ENCODE measurements at regions of chr4 and their contacts with region 1.

Region 1: GRCh38 chr4:40309250-40309774 is 25.8 kb upstream of the CHRNA9 start:
- DNase-seq: peak; percentile 95
- ATAC-seq: peak; percentile 68
- H3K4me3 Mint-ChIP-seq: peak overlapping the region; percentile 79
- H3K27ac Mint-ChIP-seq: peak overlapping the region; percentile 98
- H3K4me1 Mint-ChIP-seq: peaks cover 86% of the 10 kb centered on the region
- H3K27me3 Mint-ChIP-seq: no peaks in the 10 kb centered on the region

Region 2: DNA sequence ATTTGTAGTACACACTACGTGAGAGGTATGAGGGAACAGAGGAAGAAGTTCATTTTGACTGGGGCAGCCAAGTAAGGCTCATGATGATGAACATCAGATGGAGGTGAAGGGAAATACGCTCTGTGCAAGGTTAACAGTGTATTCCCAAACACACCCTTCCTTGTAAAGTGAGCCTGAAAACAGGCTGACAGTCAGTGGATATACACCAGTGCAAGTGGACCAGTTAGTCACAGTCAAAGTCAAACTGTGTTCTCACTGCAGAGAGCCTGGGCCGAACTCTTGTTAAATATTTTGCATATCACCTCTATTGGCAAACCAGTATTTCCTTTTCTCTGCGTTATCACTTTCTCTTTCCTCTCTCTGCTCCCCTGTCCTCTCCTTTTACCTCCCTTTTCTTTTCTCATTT is 135.8 kb before region 1 on chr4:
- CTCF ChIA-PET with region 1: no interaction called
- POLR2A ChIA-PET with region 1: no interaction called
- DNase-seq: peak; percentile 38
- ATAC-seq: peak; percentile 81
- H3K4me3 Mint-ChIP-seq: peak overlapping the region; percentile 52
- H3K27ac Mint-ChIP-seq: peak overlapping the region; percentile 84
- H3K4me1 Mint-ChIP-seq: peaks cover 32% of the 10 kb centered on the region
- H3K27me3 Mint-ChIP-seq: no peaks in the 10 kb centered on the region

Region 3: DNA sequence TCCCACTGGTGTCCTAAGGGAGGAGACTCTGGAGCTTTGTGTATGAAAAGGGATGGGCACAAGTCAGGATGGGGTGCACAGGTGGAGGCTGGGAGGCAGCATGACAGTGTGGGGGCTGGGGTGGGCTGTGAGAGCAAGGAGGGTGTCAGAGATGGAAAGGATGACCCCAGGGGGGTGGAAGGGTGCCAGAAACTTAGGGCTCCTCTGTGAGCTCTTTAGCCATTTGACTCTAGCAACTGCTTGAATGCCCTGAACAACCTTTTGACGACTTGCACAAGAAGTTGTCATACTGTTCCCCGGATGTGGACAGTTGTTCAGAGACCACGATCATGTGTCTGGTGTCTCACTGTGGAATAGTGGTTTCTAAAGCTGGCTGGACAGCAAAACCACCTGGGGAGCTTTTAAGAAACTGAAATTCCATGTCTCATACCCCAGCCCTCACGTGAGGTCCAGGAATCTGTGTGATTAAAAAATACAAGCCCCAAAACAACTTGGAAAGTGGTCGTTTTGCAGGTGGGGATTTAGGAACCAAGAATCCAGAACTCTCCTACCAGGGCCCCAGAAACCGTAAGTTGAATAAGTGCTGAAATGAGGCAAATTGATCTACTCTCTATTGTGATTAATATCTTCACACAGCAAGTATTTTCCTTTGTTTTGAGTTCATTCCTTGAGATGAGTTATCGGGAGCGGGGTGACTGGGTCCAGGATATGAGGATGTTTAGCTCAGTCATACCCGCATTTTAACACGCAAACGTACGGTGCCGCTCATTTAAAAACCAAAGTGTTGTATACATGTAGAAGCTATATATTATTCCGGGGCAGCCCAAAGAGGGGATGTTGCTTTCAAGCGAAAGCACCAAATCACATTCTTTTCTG is 109.1 kb before region 1 on chr4:
- CTCF ChIA-PET with region 1: interaction called, 149 read pairs
- POLR2A ChIA-PET with region 1: interaction called, 155 read pairs
- DNase-seq: peak; percentile 90
- ATAC-seq: peak; percentile 45
- H3K4me3 Mint-ChIP-seq: peak overlapping the region; percentile 93
- H3K27ac Mint-ChIP-seq: peak overlapping the region; percentile 96
- H3K4me1 Mint-ChIP-seq: peaks cover 37% of the 10 kb centered on the region
- H3K27me3 Mint-ChIP-seq: no peaks in the 10 kb centered on the region

Region 4: DNA sequence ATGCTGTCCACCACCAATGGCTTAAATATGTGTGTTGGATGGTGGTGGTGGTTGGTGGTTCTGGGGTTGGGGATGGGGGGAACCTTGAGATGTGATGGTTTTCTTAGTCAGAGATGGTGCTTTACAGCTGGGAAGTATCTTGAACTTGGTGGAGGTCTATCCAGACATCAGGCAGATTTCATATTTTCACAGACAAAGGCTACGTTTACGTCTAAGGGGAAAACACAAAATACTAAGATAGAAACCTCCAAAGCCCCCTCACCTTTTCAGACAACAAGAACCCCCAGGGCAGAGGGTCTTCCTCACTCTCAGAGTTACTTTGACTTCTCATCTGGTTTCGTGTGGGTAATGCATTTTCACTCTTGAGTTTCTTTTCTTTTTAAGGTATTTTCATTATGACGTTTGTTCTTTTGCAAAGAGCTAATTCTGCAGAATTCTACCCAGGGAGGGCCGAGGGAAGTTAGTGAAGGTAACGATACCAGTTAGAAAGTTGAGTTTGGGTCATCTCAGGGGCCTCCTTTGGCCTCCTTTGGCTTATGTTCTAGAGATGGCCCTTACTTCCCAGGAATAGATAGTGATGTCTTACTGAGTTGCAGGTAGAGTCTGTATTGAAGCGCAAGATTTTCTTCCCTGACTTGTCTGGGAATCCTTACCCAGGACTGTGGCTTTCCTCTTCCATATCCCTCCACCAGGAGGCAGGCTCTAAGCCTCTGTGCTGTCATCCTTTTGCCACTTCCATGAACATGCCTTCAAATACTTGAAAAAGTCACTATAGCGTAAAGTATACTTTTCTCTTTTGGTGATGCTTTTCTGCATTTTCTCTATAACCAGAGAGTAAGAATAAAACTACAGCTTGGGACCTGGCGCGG is 80.6 kb before region 1 on chr4:
- CTCF ChIA-PET with region 1: interaction called, 145 read pairs
- POLR2A ChIA-PET with region 1: interaction called, 16 read pairs
- DNase-seq: peak; percentile 56
- ATAC-seq: no peak
- H3K4me3 Mint-ChIP-seq: peak overlapping the region; percentile 64
- H3K27ac Mint-ChIP-seq: peak overlapping the region; percentile 84
- H3K4me1 Mint-ChIP-seq: peaks cover 95% of the 10 kb centered on the region
- H3K27me3 Mint-ChIP-seq: no peaks in the 10 kb centered on the region

Region 5: DNA sequence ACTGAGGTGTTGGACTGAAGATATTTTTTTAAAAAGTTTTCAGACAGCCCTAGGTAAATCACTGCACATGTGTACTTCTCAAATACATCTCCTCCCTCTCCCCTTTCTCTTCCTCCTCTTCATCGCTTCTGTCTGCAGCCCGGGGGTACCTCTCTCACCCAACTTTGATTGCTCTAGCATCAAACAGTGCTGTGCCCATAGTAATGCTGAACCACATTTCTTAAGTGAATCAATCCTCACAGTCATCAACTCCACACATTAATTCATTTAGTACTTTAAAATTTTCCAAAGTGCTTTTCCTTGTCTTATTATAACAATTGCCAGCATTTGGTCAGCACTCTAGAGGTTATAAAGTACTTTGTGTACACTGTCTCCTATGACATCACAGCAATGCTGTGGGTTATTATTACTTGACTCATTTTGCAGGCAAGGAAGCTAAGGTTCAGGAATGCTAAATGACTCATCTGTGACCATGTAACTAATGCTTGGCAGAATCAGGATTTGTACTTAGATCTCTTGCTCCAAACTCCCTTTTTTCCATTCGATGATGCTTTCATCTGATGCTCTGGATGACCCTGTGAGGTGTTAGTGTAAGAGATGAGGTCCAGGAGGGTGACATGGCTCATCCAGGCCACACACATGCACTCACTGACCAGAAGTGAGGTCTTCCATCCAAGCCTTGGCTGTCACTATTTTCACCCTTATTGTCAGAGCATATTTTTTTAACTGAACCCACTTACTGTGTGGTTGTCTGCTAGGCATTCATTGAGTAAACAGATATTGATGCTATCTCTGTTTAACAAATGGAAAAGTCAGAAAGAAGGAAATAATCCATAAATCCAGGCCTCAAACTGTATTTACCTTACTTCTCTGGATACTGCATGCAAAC is 53.7 kb before region 1 on chr4:
- CTCF ChIA-PET with region 1: interaction called, 17 read pairs
- POLR2A ChIA-PET with region 1: interaction called, 5 read pairs
- DNase-seq: no peak
- ATAC-seq: peak; percentile 27
- H3K4me3 Mint-ChIP-seq: peak overlapping the region; percentile 47
- H3K27ac Mint-ChIP-seq: peak overlapping the region; percentile 89
- H3K4me1 Mint-ChIP-seq: peaks cover 71% of the 10 kb centered on the region
- H3K27me3 Mint-ChIP-seq: no peaks in the 10 kb centered on the region

Region 6: GRCh38 chr4:40283968-40284367 is 25.3 kb before region 1 on chr4:
- CTCF ChIA-PET with region 1: interaction called, 36 read pairs
- POLR2A ChIA-PET with region 1: interaction called, 24 read pairs
- DNase-seq: peak; percentile 88
- ATAC-seq: peak; percentile 89
- H3K4me3 Mint-ChIP-seq: peak overlapping the region; percentile 37
- H3K27ac Mint-ChIP-seq: peak overlapping the region; percentile 87
- H3K4me1 Mint-ChIP-seq: peaks cover 56% of the 10 kb centered on the region
- H3K27me3 Mint-ChIP-seq: no peaks in the 10 kb centered on the region

Region 7: GRCh38 chr4:40377582-40378550 is 68.6 kb after region 1 on chr4:
- CTCF ChIA-PET with region 1: no interaction called
- POLR2A ChIA-PET with region 1: no interaction called
- DNase-seq: no peak
- ATAC-seq: no peak
- H3K4me3 Mint-ChIP-seq: no peak overlapping the region
- H3K27ac Mint-ChIP-seq: no peak overlapping the region
- H3K4me1 Mint-ChIP-seq: peaks cover 1% of the 10 kb centered on the region
- H3K27me3 Mint-ChIP-seq: no peaks in the 10 kb centered on the region

Region 8: GRCh38 chr4:40484346-40485090 is 175.2 kb after region 1 on chr4:
- CTCF ChIA-PET with region 1: no interaction called
- POLR2A ChIA-PET with region 1: no interaction called
- DNase-seq: no peak
- ATAC-seq: no peak
- H3K4me3 Mint-ChIP-seq: no peak overlapping the region
- H3K27ac Mint-ChIP-seq: no peak overlapping the region
- H3K4me1 Mint-ChIP-seq: no peaks in the 10 kb centered on the region
- H3K27me3 Mint-ChIP-seq: peaks cover 34% of the 10 kb centered on the region